ENCODE measurements at regions of chr13 and their contacts with region 1.

Region 1: GRCh38 chr13:25037057-25037813 is 58.7 kb upstream of the PABPC3 start:
- DNase-seq: peak; percentile 2
- H3K4me3 ChIP-seq: no peak overlapping the region
- CTCF ChIP-seq: peak; percentile 74

Region 2: DNA sequence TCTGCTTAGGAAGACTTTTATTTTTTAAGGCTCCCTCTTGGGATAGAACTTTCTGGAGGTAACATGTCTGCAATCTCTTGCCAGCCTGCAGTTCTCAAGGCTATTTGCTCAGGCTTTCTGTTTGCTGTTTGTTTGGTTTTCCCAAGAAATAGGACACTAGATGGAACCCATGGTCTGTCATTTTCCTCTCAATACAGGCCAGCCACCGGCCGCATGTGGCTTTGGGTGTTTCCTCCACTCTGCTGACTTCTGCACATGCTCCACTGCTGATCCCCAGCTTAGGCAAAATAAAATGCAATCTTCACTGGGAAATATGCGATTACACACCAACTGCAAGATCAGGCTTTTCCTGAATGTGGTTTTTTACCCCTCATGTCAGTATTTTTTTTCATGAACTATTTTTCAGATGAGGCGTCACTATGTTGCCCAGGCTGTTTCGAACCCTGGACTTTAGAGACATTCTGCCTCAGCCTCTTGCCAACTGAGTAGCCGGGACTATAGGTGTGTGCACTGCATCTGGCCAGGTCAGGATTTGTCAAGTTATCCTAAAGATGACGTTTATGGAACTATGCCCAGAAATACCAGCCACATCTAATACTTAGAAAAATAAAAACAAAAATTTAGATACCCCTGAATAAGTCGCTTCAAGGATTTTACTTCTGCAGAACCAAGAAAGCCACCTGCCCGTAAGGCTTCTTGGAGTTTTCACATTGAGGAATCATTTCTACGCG is 35.6 kb before region 1 on chr13:
- CTCF ChIA-PET with region 1: interaction called, 12 read pairs
- POLR2A ChIA-PET with region 1: no interaction called
- DNase-seq: no peak
- H3K4me3 ChIP-seq: no peak overlapping the region
- CTCF ChIP-seq: no peak

Region 3: DNA sequence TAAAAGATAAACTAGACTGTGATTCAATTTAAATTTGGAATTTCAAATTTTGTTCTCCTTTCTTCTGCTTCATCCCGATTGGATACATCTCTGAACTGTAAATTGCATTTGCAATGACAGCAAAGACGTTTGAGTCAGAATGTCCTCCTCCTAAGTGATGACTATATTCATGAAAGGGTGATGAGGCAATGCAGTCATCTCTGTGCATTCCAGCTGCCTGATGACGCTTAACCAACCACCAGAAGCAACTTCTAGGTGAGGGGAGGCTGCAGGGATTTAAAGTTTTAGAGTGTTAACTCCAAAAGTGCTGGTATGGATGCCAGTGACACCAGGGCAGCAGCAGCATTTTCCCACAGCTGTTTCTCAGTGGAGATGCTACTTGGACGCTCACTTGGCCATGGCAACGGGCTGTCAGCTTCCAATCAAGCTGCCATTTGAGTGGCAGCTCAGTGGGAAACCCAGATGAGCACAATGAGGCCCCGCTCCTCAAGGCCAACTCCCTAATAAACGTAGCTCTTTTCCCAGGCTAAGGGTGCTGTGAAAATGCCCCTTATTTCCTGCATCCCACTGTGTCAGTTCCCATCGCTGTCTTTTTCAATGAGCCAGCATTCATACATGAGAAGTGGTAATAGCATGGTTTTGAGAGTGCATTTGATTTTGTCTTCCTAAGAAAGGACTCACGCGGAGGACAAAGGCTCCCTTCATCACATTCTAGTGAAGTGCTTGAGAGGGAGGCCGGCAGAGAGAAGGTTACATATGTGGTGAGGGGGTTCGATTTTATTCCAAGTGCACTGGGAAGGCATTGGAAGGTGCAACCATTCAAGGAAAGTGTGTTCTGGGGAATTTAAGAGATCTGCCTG is 180.0 kb after region 1 on chr13:
- CTCF ChIA-PET with region 1: no interaction called
- POLR2A ChIA-PET with region 1: no interaction called
- DNase-seq: no peak
- H3K4me3 ChIP-seq: no peak overlapping the region
- CTCF ChIP-seq: no peak